ENCODE measurements at regions of chrX and their contacts with region 1.

Region 1: GRCh38 chrX:69493193-69493592 is 10.9 kb upstream of the NALF2 start:
- DNase-seq: peak; percentile 20
- ATAC-seq: no peak
- H3K4me3 ChIP-seq: no peak overlapping the region
- H3K4me3 Mint-ChIP-seq: no peak overlapping the region
- H3K27ac ChIP-seq: no peak overlapping the region
- H3K27ac Mint-ChIP-seq: no peak overlapping the region
- H3K4me1 ChIP-seq: no peaks in the 10 kb centered on the region
- H3K4me1 Mint-ChIP-seq: no peaks in the 10 kb centered on the region
- H3K27me3 ChIP-seq: peaks cover 0 to 6% (median 0%) of the 10 kb centered on the region in 4 experiments
- H3K27me3 Mint-ChIP-seq: peaks cover 20% of the 10 kb centered on the region
- CTCF ChIP-seq: no peak

Region 2: GRCh38 chrX:70096052-70096451 is 602.9 kb after region 1 on chrX:
- CTCF ChIA-PET with region 1: interaction called, 12 read pairs
- POLR2A ChIA-PET with region 1: no interaction called
- intact Hi-C with region 1: no loop called
- DNase-seq: no peak
- ATAC-seq: no peak
- H3K4me3 ChIP-seq: no peak overlapping the region
- H3K4me3 Mint-ChIP-seq: no peak overlapping the region
- H3K27ac ChIP-seq: no peak overlapping the region
- H3K27ac Mint-ChIP-seq: no peak overlapping the region
- H3K4me1 ChIP-seq: no peaks in the 10 kb centered on the region
- H3K4me1 Mint-ChIP-seq: no peaks in the 10 kb centered on the region
- H3K27me3 ChIP-seq: peaks cover 0 to 7% (median 0%) of the 10 kb centered on the region in 4 experiments
- H3K27me3 Mint-ChIP-seq: peaks cover 9% of the 10 kb centered on the region
- CTCF ChIP-seq: no peak

Measured in B cell (primary cell).